ENCODE measurements at regions of chr11 and their contacts with region 1.

Region 1: DNA sequence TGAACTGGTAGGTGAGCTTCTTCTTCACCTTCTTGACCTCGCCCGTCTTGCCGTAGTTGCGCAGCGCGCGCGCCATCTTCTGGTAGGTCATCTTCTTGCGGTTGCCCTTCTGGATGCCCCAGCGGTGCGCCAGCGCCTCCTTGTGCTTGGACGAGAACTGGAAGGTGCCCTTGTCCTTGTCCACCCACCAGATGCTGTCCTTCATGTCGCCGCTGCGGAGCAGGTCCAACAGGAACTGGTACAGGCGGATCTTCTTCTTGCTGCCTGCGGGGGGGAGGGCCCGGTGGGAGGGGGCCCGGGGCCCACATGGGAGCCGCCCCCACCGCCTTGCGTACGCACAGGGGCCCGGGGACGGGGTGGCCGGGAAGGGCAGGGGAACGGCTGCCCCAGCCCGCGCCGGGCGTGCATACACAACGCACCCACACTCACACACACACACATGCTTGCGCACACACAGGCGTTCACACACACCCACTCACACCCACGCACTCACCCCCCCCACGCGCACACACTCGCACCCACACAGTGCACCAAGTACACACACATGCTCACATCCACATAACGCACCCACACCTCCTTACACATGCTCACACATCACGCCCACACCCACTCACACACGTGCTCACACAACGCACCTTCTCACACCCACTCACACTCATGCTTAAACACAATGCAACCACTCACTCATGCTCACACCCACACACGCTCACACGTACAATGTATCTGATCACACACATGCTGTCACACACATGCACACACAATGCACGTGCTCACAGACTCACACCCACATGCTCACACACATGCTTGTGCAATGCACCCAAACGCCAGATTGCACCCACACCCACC is 3.0 kb upstream of the MYBPC3 start:
- DNase-seq: peak; percentile 95 to 100
- H3K4me3 ChIP-seq: peak overlapping the region; percentile 5 to 59 (median 18); a peak in 5 of 8 replicates
- H3K27ac ChIP-seq: no peak overlapping the region
- H3K4me1 ChIP-seq: peaks cover 0 to 12% (median 5%) of the 10 kb centered on the region in 4 experiments; a peak in 6 of 7 replicates
- H3K27me3 ChIP-seq: no peaks in the 10 kb centered on the region
- CTCF ChIP-seq: peak in 2 of 3 experiments; percentile 100; a peak in 3 of 4 replicates
- EP300 ChIP-seq: 0 out of 3 replicates have a peak, but pooled peaks of 1 of the 2 experiments have one; percentile 9
- POLR2A ChIP-seq: peak in 1 of 2 experiments; percentile 64; a peak in 1 of 3 replicates
- RAD21 ChIP-seq: peak; percentile 99 to 100

Region 2: DNA sequence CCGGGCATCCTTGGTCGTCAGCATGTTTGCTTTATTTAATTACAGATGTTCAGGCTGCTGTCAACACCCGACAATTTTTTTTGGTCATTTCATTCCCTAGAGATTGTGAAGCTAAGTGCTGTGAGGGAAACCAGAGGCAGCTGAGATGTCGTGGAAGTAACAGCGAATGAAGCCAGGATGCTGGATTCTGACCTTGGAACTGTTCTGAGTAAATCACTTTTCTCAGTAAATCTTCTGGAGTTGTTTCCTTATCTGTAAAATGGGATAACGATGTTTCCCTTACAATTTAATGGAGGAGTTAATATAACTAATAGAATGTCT is 509.0 kb before region 1 on chr11:
- CTCF ChIA-PET with region 1: no interaction called
- POLR2A ChIA-PET with region 1: no interaction called
- DNase-seq: no peak
- H3K4me3 ChIP-seq: peak overlapping the region; percentile 90 to 98 (median 92)
- H3K27ac ChIP-seq: no peak overlapping the region
- H3K4me1 ChIP-seq: peaks cover 0 to 2% (median 0%) of the 10 kb centered on the region in 4 experiments; a peak in 2 of 7 replicates
- H3K27me3 ChIP-seq: no peaks in the 10 kb centered on the region; a peak in 1 of 7 replicates
- CTCF ChIP-seq: no peak
- EP300 ChIP-seq: no peak
- POLR2A ChIP-seq: no peak
- RAD21 ChIP-seq: no peak

Region 3: GRCh38 chr11:47269002-47269828 is 86.3 kb before region 1 on chr11:
- CTCF ChIA-PET with region 1: interaction called, 26 read pairs
- POLR2A ChIA-PET with region 1: interaction called, 3 read pairs
- DNase-seq: peak in 1 of 2 experiments; percentile 90
- H3K4me3 ChIP-seq: peak overlapping the region; percentile 75 to 93 (median 81)
- H3K27ac ChIP-seq: peak overlapping the region; percentile 65; the same call in 1 of the 2 replicates
- H3K4me1 ChIP-seq: peaks cover 14 to 25% (median 17%) of the 10 kb centered on the region in 4 experiments
- H3K27me3 ChIP-seq: no peaks in the 10 kb centered on the region
- CTCF ChIP-seq: no peak; a peak in 1 of 4 replicates
- EP300 ChIP-seq: peak in 1 of 2 experiments; percentile 79; a peak in 1 of 3 replicates
- POLR2A ChIP-seq: no peak; a peak in 1 of 3 replicates
- RAD21 ChIP-seq: no peak

Region 4: GRCh38 chr11:47314992-47315391 is 40.5 kb before region 1 on chr11:
- CTCF ChIA-PET with region 1: interaction called, 10 read pairs
- POLR2A ChIA-PET with region 1: no interaction called
- DNase-seq: no peak
- H3K4me3 ChIP-seq: no peak overlapping the region
- H3K27ac ChIP-seq: no peak overlapping the region
- H3K4me1 ChIP-seq: no peaks in the 10 kb centered on the region
- H3K27me3 ChIP-seq: no peaks in the 10 kb centered on the region
- CTCF ChIP-seq: no peak
- EP300 ChIP-seq: no peak
- POLR2A ChIP-seq: no peak
- RAD21 ChIP-seq: no peak

Region 5: GRCh38 chr11:47329987-47330931 is 25.2 kb before region 1 on chr11:
- CTCF ChIA-PET with region 1: interaction called, 32 read pairs
- POLR2A ChIA-PET with region 1: interaction called, 3 read pairs
- DNase-seq: no peak
- H3K4me3 ChIP-seq: no peak overlapping the region
- H3K27ac ChIP-seq: no peak overlapping the region
- H3K4me1 ChIP-seq: no peaks in the 10 kb centered on the region
- H3K27me3 ChIP-seq: no peaks in the 10 kb centered on the region
- CTCF ChIP-seq: peak; percentile 8 to 35 (median 28); a peak in 3 of 4 replicates
- EP300 ChIP-seq: no peak
- POLR2A ChIP-seq: no peak
- RAD21 ChIP-seq: peak in 1 of 2 experiments; percentile 34; a peak in 2 of 4 replicates

Region 6: GRCh38 chr11:47340980-47341775 is 14.3 kb before region 1 on chr11:
- CTCF ChIA-PET with region 1: interaction called, 17 read pairs
- POLR2A ChIA-PET with region 1: no interaction called
- DNase-seq: no peak
- H3K4me3 ChIP-seq: no peak overlapping the region
- H3K27ac ChIP-seq: no peak overlapping the region
- H3K4me1 ChIP-seq: no peaks in the 10 kb centered on the region
- H3K27me3 ChIP-seq: no peaks in the 10 kb centered on the region
- CTCF ChIP-seq: no peak
- EP300 ChIP-seq: no peak
- POLR2A ChIP-seq: no peak
- RAD21 ChIP-seq: no peak

Region 7: GRCh38 chr11:47499614-47500013 is 144.1 kb after region 1 on chr11:
- CTCF ChIA-PET with region 1: no interaction called
- POLR2A ChIA-PET with region 1: no interaction called
- DNase-seq: no peak
- H3K4me3 ChIP-seq: no peak overlapping the region
- H3K27ac ChIP-seq: peak overlapping the region; percentile 11; the same call in 1 of the 2 replicates
- H3K4me1 ChIP-seq: peaks cover 0 to 12% (median 3%) of the 10 kb centered on the region in 4 experiments; a peak in 5 of 7 replicates
- H3K27me3 ChIP-seq: no peaks in the 10 kb centered on the region
- CTCF ChIP-seq: no peak
- EP300 ChIP-seq: no peak
- POLR2A ChIP-seq: no peak
- RAD21 ChIP-seq: no peak

Measured in H1 (cell line).